Activated B cell treated with CpG ODN at 0.5 μM for 24 hours (primary cell): ENCODE measurements at regions of chr2 and their contacts with region 1.

Region 1: GRCh38 chr2:207625018-207625907 is at the start of gene METTL21A:
- DNase-seq: peak; percentile 96
- ATAC-seq: peak; percentile 79
- H3K4me3 Mint-ChIP-seq: peak within 1 kb of the TSS; percentile 94
- H3K27ac Mint-ChIP-seq: peak within 1 kb of the TSS; percentile 98
- H3K4me1 Mint-ChIP-seq: peaks cover 50% of the 10 kb centered on the region
- H3K27me3 Mint-ChIP-seq: no peaks in the 10 kb centered on the region
- CTCF ChIP-seq: no peak
- total RNA-seq, gene METTL21A: 34.2 and 34.3 TPM in 2 replicates

Region 2: GRCh38 chr2:206159346-206160124 is 1465.7 kb before region 1 on chr2 and contains the starts of genes EEF1B2 and NDUFS1:
- CTCF ChIA-PET with region 1: no interaction called
- POLR2A ChIA-PET with region 1: no interaction called
- intact Hi-C with region 1: loop called (anchors 1 kb)
- DNase-seq: peak; percentile 90
- ATAC-seq: peak; percentile 88
- H3K4me3 Mint-ChIP-seq: peak within 1 kb of the TSS; percentile 99
- H3K27ac Mint-ChIP-seq: peak within 1 kb of the TSS; percentile 97
- H3K4me1 Mint-ChIP-seq: peaks cover 56% of the 10 kb centered on the region
- H3K27me3 Mint-ChIP-seq: no peaks in the 10 kb centered on the region
- CTCF ChIP-seq: no peak
- total RNA-seq, gene EEF1B2: 1,278 and 1,486 TPM in 2 replicates
- total RNA-seq, gene NDUFS1: 47.3 and 50.1 TPM in 2 replicates

Region 3: DNA sequence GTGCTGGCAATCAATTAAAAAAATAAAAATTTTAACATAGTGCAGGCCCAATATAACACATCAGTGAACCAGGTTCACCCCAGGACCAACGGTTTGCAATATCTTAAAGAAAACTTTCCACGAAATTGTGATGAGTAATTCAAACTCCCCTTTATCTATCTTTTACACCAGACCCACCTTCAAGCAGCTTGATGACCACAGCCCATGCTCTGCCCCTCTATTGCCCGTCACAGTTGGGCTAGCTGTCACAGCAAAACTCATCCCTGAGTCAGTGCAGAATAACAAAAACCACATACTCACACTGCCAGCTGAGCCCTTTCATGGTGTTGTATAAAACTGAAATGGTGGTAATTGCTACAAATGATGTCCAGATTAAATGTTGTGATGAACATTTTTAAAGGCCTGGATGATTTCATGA is 208.0 kb before region 1 on chr2:
- CTCF ChIA-PET with region 1: no interaction called
- POLR2A ChIA-PET with region 1: no interaction called
- intact Hi-C with region 1: no loop called
- DNase-seq: no peak
- ATAC-seq: no peak
- H3K4me3 Mint-ChIP-seq: no peak overlapping the region
- H3K27ac Mint-ChIP-seq: no peak overlapping the region
- H3K4me1 Mint-ChIP-seq: no peaks in the 10 kb centered on the region
- H3K27me3 Mint-ChIP-seq: peaks cover 9% of the 10 kb centered on the region
- CTCF ChIP-seq: no peak

Region 4: DNA sequence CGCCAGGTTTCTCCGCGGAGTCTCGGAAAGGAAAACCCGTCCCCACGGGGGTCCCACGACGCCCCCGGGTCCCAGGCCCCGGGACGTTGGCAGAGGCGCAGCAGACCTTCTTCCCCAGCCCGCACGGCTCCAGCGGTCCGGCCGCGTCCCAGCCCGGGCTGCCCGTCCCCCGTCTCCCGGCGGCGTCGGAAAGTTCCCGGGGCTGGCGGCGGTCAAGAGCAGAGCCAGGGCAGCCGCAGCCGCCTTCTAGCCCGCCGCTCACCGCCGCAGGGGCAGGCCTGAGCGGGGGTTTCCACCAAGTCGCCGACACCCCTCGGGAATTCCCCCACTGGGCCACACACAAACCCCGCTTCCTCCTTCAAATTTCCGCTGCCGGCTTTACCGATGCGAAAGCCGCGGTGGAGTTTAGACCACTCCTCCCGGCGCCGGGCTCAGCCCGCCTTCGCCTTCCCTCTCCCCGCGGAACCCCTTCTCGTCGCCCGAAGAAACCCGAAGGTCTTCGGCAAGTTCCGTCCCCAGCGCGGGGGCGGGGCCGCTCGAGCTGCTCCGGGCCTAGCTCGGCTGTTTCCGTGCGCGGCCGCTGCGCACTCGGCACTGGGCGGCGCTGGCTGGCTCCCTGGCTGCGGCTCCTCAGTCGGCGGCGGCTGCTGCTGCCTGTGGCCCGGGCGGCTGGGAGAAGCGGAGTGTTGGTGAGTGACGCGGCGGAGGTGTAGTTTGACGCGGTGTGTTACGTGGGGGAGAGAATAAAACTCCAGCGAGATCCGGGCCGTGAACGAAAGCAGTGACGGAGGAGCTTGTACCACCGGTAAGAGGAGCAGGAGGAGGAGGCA is 95.7 kb before region 1 on chr2 and contains the start of gene CREB1:
- CTCF ChIA-PET with region 1: interaction called, 12 read pairs
- POLR2A ChIA-PET with region 1: interaction called, 104 read pairs
- intact Hi-C with region 1: loop called (anchors 1 kb)
- DNase-seq: peak; percentile 100
- ATAC-seq: peak; percentile 80
- H3K4me3 Mint-ChIP-seq: peak within 1 kb of the TSS; percentile 95
- H3K27ac Mint-ChIP-seq: peak within 1 kb of the TSS; percentile 100
- H3K4me1 Mint-ChIP-seq: peaks cover 74% of the 10 kb centered on the region
- H3K27me3 Mint-ChIP-seq: no peaks in the 10 kb centered on the region
- CTCF ChIP-seq: no peak
- total RNA-seq, gene CREB1: 112 and 127 TPM in 2 replicates

Region 5: DNA sequence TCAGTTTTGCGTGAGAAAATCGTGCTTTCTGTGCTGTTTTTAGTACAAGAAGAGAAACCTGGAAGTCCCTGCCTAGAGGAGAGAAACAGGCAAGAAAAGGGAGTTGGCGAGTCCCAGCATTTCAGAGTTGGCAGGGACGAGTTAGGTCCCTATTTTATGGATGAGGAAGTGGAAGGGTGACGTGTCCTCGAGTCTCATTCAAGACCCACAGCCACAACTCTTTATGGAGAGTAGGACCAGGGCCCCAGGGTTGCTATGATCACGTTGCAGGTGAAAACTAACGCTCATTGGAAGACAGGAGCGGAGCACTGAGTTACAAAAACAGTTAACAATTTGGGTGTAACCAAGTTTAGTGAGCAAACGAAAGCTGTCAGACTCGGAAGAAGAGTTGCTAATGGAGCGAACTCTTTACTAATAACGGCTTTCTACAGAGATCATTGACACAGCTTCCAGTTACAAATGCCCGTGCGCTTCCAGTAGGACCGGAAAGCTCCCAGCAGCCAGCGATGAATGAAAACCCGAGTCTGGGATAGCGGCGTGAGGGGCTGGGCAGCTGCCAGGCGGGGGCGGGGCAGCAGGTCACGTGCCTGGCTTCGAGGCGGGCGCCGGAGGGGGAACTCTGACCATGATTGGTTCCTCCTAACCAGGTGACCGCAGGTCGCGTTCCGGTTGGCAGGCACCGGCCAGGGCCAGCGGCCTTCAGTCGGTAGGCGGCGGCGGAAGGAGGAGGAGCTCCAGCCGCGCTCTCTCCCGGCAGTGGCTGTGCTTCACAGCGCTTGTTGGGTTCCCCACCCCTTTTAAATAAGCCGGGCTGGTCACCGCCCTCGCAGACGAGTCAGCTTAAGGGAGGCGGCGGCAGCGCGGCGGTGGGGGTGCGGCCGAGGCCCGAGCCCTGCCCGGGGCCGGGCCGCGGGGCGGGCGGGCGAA is 85.8 kb after region 1 on chr2 and contains the start of gene CCNYL1:
- CTCF ChIA-PET with region 1: interaction called, 22 read pairs
- POLR2A ChIA-PET with region 1: interaction called, 85 read pairs
- intact Hi-C with region 1: loop called (anchors 1 kb)
- DNase-seq: peak; percentile 92
- ATAC-seq: peak; percentile 95
- H3K4me3 Mint-ChIP-seq: peak within 1 kb of the TSS; percentile 95
- H3K27ac Mint-ChIP-seq: peak within 1 kb of the TSS; percentile 85
- H3K4me1 Mint-ChIP-seq: peaks cover 23% of the 10 kb centered on the region
- H3K27me3 Mint-ChIP-seq: no peaks in the 10 kb centered on the region
- CTCF ChIP-seq: no peak
- total RNA-seq, gene CCNYL1: 12.2 and 13.5 TPM in 2 replicates

Region 6: DNA sequence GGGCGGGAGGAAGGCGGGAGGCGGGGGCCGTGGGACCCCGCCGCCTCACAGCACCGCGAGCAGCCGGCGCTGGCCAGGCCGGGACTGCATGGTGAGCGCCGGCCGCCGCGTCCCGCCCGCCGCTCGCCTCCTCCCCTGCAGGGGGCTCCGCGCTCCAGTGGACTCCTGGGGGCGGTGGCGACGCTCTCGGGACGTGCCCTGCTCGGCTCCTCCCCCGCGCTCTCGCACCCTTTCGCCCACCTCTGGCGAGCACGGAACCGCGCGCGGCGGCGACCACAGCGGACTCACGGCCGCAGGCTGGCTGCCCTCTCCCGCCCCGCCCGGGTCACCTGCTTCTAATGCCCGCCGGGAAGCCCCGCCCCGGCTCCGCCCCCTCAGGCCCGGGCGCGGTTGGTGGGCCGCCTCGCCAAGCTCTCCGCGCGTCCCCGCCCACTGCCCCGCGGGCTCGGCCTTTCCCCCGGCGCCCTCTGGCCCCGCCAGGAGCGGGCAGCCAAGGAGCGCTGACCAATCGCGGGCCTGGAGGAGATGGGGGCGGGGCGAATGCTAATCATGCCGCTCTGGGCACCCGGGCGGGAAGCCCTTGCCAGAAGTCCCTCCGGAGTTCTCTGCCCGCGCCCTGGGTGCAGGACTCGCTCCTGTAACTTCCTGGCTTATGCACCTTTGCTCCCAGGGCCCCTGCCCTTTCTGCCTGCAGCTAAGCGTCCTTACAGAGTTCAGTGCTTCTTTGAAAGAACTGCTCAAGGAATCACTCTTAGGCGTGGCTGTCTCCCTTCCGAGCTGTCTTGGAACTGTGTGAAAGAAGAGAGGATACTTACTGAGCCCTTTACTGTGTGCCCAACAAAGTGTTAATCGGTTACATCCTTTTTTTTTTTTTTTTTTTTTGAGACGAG is 144.6 kb after region 1 on chr2 and contains the start of gene FZD5:
- CTCF ChIA-PET with region 1: interaction called, 3 read pairs
- POLR2A ChIA-PET with region 1: interaction called, 13 read pairs
- intact Hi-C with region 1: loop called (anchors 1 kb)
- DNase-seq: peak; percentile 93
- ATAC-seq: peak; percentile 91
- H3K4me3 Mint-ChIP-seq: peak within 1 kb of the TSS; percentile 87
- H3K27ac Mint-ChIP-seq: no peak within 1 kb of the TSS
- H3K4me1 Mint-ChIP-seq: peaks cover 36% of the 10 kb centered on the region
- H3K27me3 Mint-ChIP-seq: peaks cover 7% of the 10 kb centered on the region
- CTCF ChIP-seq: no peak
- total RNA-seq, gene FZD5: 0.66 and 0.89 TPM in 2 replicates

Region 7: DNA sequence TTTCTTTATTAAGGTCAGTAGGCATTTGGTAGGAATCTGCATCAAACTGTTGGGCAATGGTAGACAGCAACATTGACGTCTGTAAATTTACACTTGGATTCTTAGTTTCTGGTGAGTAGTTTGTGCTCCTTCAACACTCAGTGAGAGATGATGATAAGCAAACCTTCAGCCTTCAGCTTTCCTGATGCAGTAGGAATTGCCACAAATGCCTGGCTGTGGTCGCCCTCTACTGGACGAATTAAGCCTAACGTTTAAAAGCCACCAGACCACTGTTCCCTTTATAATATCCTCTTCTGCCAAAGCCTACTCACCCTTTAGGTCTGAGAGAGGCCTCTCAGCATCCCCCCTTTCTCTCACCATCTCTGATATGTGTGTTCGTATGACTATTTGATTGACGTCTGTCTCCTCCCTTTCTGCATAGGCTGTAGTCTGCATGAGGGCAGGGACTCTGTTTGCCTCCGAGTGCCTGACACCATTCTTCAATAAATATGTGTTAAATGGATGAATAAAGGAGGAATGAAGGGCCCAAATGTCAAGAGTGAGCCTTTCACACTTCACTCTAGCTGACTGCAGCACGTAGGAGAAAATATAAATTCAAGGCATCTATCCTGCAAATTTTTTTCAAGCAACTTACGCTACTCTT is 447.1 kb after region 1 on chr2:
- CTCF ChIA-PET with region 1: no interaction called
- POLR2A ChIA-PET with region 1: no interaction called
- intact Hi-C with region 1: loop called (anchors 1 kb)
- DNase-seq: no peak
- ATAC-seq: peak; percentile 71
- H3K4me3 Mint-ChIP-seq: no peak overlapping the region
- H3K27ac Mint-ChIP-seq: no peak overlapping the region
- H3K4me1 Mint-ChIP-seq: no peaks in the 10 kb centered on the region
- H3K27me3 Mint-ChIP-seq: peaks cover 7% of the 10 kb centered on the region
- CTCF ChIP-seq: peak; percentile 63